ENCODE measurements at regions of chr3 and their contacts with region 1.

Region 1: GRCh38 chr3:99246010-99246654 is 344.6 kb upstream of the DCBLD2 start:
- DNase-seq: no peak
- H3K4me3 ChIP-seq: no peak overlapping the region
- H3K27ac ChIP-seq: peak overlapping the region; percentile 20
- H3K4me1 ChIP-seq: peaks cover 34% of the 10 kb centered on the region
- H3K27me3 ChIP-seq: no peaks in the 10 kb centered on the region
- CTCF ChIP-seq: no peak

Region 2: DNA sequence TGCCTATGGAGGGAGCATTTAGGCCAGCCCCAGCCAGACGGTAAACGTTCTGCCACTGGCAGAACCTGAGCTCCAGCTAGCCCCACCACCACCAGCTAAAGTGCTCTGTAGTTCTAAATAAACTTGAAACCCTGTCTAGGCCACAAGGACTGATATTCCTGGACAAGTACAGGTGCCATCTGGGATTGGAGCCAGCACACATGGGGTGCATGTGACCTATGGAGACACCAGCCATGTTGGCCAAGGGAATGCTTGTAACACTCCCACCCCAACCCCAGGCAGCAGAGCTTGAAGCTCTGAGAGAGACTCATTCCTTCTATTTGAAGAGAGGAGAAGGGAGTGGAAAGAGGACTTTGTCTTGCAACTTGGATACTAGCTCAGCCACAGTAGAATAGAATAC is 60.1 kb before region 1 on chr3:
- CTCF ChIA-PET with region 1: no interaction called
- POLR2A ChIA-PET with region 1: no interaction called
- intact Hi-C with region 1: loop called (anchors 10 kb)
- DNase-seq: no peak
- H3K4me3 ChIP-seq: no peak overlapping the region
- H3K27ac ChIP-seq: no peak overlapping the region
- H3K4me1 ChIP-seq: no peaks in the 10 kb centered on the region
- H3K27me3 ChIP-seq: no peaks in the 10 kb centered on the region
- CTCF ChIP-seq: no peak

Region 3: DNA sequence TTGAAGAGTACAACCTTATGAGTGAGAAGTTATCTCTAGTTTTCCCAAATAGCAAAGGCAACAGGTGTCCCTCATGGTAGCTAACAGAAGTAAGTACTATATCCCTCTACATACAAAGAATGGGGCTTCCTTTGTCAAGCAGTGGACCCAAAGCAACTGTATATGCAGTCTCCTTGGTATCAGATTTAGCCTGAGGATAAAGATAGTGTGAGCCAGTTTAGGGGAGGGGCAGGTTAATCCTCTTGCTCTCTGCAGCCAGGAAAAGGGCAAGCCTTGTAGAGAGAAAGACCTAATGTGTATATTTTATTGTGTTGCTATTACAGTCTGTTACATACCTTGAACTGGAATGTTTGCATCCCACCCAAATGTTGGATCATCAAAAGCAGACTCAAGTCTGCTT is 274.4 kb after region 1 on chr3:
- CTCF ChIA-PET with region 1: no interaction called
- POLR2A ChIA-PET with region 1: no interaction called
- intact Hi-C with region 1: no loop called
- DNase-seq: no peak
- H3K4me3 ChIP-seq: no peak overlapping the region
- H3K27ac ChIP-seq: no peak overlapping the region
- H3K4me1 ChIP-seq: peaks cover 9% of the 10 kb centered on the region
- H3K27me3 ChIP-seq: no peaks in the 10 kb centered on the region
- CTCF ChIP-seq: no peak